ENCODE measurements at regions of chr9 and their contacts with region 1.

Region 1: DNA sequence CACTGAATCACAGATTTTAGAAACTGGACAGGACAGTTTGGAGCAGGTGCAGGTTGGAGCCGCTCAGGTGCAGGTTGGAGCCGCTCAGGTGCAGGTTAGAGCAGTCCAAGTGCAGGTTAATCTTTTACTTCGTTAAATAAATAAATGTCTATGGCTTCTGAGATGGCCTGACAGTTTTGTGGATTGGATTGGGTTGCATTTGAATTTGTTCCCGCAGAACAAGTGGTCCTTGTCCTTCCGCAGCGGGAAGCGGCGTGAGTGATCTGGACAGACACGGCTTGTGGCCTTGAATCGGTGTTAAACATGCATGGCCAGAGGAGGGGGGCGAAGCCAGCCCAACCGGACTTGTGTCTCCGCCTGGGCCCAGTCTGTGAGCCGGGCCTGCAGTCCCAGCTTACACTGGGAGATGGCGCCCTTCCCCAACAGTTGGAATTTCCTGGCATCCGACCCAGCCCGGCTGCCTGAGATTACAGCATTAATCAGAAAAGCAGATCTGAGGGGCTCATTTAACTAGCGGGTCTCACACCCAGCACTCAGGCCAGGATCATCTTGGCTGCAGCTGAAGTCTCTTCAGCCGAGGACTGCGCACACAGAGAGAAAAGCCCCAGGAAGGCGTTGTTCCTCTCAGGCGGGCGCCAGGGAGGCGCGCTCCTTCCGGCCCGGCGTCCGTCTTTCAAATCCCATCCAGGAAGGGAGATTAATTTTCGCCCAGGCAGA is 1.5 kb upstream of the OLFM1 start:
- DNase-seq: peak; percentile 84
- ATAC-seq: peak; percentile 70

Region 2: DNA sequence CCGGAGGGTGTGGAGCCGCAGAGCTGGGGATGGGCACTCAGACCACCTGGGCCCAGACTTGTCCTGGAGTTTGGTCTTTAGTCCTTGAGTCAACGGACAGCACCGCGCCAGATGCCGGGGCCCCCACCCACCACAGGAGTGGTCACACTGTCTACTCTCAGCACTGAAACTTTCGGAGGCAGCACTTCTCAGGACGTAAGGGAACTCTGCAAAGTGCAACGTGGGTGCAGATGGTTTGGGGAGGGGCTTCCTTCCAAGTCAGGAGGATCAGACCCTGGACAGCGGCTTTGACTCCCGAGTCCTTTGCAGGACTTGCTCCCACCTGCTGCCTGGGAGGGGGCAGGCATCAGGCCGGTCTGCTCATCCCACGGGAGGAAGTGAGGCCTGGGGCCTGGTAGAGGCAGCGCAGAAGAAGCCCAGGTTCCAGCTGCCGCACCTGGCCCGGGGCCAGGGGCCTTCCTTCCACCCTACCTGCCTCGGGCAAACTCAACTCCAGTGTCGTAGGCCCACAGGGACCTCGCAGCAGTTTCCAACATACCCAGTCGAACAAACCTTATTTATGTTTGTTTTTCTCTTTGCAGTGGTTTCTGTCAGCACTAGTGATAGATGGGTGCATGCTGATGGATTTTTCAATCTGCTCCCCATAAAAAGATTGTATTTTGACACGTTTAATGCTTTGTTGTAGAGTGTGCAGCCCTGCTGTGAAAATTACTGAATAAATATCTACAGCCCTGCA is 243.8 kb after region 1 on chr9:
- intact Hi-C with region 1: no loop called
- DNase-seq: no peak
- ATAC-seq: no peak

Region 3: DNA sequence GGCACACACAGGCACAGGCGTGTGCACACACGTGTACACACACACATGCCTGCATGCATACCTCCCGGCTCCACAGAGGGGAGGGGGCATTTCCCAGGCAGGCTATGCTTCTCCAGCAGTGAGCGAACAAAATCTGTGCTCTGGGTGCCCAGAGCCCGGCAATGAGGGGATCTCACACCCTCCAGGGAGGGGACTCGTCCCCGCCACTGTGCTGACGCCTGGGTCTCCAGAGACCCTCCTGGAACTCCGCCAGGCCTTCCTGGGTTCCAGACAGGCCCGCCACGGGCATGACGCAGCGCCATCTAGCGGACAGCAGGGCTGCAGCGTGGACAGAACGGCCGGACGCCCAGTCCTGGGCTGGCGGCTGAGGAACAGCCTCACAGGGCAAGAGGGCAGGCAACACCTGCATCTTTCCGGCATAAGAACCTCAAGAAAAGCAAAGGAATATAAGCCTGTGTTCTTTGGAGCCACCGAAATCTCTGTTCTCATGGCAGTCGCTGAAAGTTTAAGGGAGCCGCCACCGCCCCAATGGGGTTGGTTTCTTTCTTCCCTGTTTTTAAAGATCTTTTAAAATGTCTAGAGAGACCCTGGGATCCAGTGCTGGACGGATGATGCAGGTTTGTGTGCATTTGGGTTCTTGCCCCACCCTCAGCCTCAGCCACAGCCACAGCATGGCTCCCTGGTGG is 258.0 kb after region 1 on chr9:
- intact Hi-C with region 1: loop called (anchors 1 kb)
- DNase-seq: peak; percentile 81
- ATAC-seq: peak; percentile 62

Region 4: DNA sequence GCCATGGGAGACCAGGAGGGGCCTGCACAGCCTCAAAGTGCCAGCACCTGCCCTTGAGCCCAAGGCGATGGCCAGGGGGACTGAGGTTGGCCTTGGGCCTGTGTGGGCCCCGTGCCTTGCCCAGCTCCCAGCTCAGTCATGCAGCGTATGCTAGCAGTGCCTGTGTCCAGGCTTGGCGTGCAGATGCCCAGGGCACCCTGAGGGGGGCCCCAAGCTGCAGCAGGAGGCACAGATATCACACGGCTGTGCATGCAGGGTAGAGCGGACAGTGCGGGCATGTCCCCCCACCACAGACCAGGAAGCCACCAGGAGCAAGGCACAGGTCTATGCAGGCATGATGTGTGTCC is 313.3 kb after region 1 on chr9:
- intact Hi-C with region 1: no loop called
- DNase-seq: peak; percentile 53
- ATAC-seq: no peak

Region 5: DNA sequence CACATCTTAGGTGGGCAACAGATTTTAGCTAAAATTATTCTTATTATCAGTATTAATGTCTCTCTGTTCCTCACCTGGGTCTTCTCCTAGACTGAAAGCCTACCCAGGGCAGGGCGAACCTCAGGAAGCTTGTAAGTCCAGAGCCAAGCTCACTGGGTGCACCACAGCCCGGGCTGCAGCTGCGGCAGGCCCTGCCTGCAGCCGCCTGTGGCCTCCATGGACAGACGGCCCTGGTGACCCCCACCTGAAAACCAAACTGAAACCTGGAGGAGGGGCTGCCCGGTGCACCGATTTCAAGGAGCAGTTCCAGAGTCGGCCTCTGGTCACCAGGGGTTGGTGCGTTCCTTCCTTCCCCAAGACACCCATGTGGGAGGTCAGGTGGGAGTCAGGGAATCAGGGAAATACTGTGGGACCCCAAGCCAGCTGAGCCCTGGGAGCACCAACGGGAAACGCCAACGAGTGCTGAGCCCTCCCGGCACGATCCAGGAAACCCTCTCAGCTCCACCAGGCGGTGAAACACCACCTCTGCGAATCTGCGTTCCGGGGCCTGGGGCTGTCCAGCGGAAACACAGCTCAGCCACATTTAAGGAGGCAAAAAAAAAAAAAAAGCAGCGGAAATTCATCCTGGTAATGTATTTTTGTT is 325.0 kb after region 1 on chr9:
- intact Hi-C with region 1: loop called (anchors 1 kb)
- DNase-seq: no peak
- ATAC-seq: no peak